Natural killer cell (primary cell): ENCODE measurements at regions of chr14 and their contacts with region 1.

Region 1: GRCh38 chr14:74493343-74494261 is at the start of gene ISCA2:
- DNase-seq: peak; percentile 98 to 99
- ATAC-seq: peak; percentile 88 to 97 (median 91)
- H3K4me3 ChIP-seq: peak within 1 kb of the TSS; percentile 92
- H3K4me3 Mint-ChIP-seq: no peak within 1 kb of the TSS
- H3K27ac ChIP-seq: peak within 1 kb of the TSS; percentile 65
- H3K27ac Mint-ChIP-seq: no peak within 1 kb of the TSS
- H3K4me1 ChIP-seq: peaks cover 18% of the 10 kb centered on the region
- H3K4me1 Mint-ChIP-seq: peaks cover 16 to 17% of the 10 kb centered on the region in 2 donors
- H3K27me3 ChIP-seq: no peaks in the 10 kb centered on the region
- H3K27me3 Mint-ChIP-seq: no peaks in the 10 kb centered on the region
- CTCF ChIP-seq: no peak
- total RNA-seq, gene ISCA2: 12.0 to 18.2 (median 15.3) TPM

Region 2: GRCh38 chr14:74084277-74085046 is 409.1 kb before region 1 on chr14 and contains the starts of genes ALDH6A1 and LIN52:
- intact Hi-C with region 1: loop called (anchors 2 kb)
- DNase-seq: peak; percentile 100
- ATAC-seq: peak; percentile 85 to 95 (median 86)
- H3K4me3 ChIP-seq: peak within 1 kb of the TSS; percentile 72
- H3K4me3 Mint-ChIP-seq: peak within 1 kb of the TSS; percentile 99
- H3K27ac ChIP-seq: peak within 1 kb of the TSS; percentile 69
- H3K27ac Mint-ChIP-seq: peak within 1 kb of the TSS; percentile 92 to 96
- H3K4me1 ChIP-seq: peaks cover 11% of the 10 kb centered on the region
- H3K4me1 Mint-ChIP-seq: peaks cover 39 to 50% of the 10 kb centered on the region in 2 donors
- H3K27me3 ChIP-seq: no peaks in the 10 kb centered on the region
- H3K27me3 Mint-ChIP-seq: no peaks in the 10 kb centered on the region
- CTCF ChIP-seq: no peak
- total RNA-seq, gene ALDH6A1: 8.5 to 9.6 (median 9.5) TPM
- total RNA-seq, gene LIN52: 10.6 to 15.0 (median 12.8) TPM

Region 3: DNA sequence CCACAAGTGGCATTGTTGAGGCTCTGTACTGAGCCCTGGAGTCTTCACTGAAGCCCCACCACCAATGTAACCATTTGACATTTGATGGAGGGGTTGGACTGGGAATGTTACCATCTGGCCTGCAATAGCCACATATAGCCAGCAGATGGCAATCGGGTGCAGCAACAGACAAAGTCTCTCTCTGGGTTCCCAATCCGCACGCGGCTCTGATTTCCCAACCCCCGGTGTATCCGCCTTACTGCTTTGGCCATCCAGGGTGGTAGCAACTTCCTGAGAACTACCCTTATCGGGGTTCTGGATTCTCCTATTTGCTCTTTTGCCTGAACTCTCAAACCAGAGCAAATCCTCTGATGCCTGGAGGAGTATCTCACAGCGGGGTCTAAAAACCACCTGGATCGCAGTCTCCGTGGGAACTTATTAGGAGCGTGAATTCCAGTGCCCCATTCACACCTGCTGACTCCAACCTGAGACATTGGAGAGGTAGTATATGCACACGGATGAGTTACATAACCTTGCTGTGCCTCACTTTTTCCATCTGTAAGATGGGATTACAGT is 131.2 kb before region 1 on chr14:
- intact Hi-C with region 1: loop called (anchors 1 kb)
- DNase-seq: peak; percentile 54 to 78
- ATAC-seq: peak; percentile 76 to 86 (median 81)
- H3K4me3 ChIP-seq: no peak overlapping the region
- H3K4me3 Mint-ChIP-seq: no peak overlapping the region
- H3K27ac ChIP-seq: no peak overlapping the region
- H3K27ac Mint-ChIP-seq: peak overlapping the region in 1 of 2 donors; percentile 2
- H3K4me1 ChIP-seq: peaks cover 3% of the 10 kb centered on the region
- H3K4me1 Mint-ChIP-seq: peaks cover 5% of the 10 kb centered on the region in 2 donors
- H3K27me3 ChIP-seq: no peaks in the 10 kb centered on the region
- H3K27me3 Mint-ChIP-seq: peaks cover 10 to 20% of the 10 kb centered on the region in 2 donors
- CTCF ChIP-seq: peak; percentile 91

Region 4: GRCh38 chr14:74712499-74713394 is 219.1 kb after region 1 on chr14 and contains the starts of genes AREL1 and FCF1:
- intact Hi-C with region 1: loop called (anchors 2 kb)
- DNase-seq: peak; percentile 74 to 94
- ATAC-seq: peak; percentile 92 to 94 (median 93)
- H3K4me3 ChIP-seq: peak within 1 kb of the TSS; percentile 76
- H3K4me3 Mint-ChIP-seq: peak within 1 kb of the TSS; percentile 97
- H3K27ac ChIP-seq: peak within 1 kb of the TSS; percentile 87
- H3K27ac Mint-ChIP-seq: peak within 1 kb of the TSS; percentile 97 to 99
- H3K4me1 ChIP-seq: peaks cover 7% of the 10 kb centered on the region
- H3K4me1 Mint-ChIP-seq: peaks cover 50 to 54% of the 10 kb centered on the region in 2 donors
- H3K27me3 ChIP-seq: no peaks in the 10 kb centered on the region
- H3K27me3 Mint-ChIP-seq: no peaks in the 10 kb centered on the region
- CTCF ChIP-seq: no peak
- total RNA-seq, gene AREL1: 65.9 to 83.0 (median 82.3) TPM
- total RNA-seq, gene FCF1: 37.1 to 49.6 (median 40.4) TPM

Region 5: DNA sequence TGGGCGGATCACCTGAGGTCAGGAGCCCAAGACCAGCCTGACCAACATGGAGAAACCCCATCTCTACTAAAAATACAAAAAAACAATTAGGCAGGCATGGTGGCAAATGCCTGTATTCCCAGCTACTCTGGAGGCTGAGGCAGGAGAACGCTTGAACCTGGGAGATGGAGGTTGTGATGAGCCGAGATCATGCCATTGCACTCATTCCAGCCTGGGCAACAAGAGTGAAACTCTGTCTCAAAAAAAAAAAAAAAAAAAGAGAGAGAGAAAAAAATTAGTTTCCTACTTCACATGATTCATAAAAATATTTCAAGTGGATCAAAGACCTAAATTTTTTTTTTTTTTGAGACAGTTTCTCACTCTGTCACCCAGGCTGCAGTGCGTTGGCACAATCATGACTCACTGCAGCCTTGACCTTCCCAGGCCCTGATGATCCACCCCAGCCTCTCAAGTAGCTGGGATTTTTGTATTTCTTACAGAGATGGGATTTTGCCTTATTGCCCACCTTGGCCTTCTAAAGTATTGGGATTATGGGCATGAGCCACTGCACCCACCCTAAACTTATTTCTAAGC is 244.2 kb after region 1 on chr14:
- intact Hi-C with region 1: no loop called
- DNase-seq: no peak
- ATAC-seq: no peak
- H3K4me3 ChIP-seq: no peak overlapping the region
- H3K4me3 Mint-ChIP-seq: no peak overlapping the region
- H3K27ac ChIP-seq: no peak overlapping the region
- H3K27ac Mint-ChIP-seq: no peak overlapping the region
- H3K4me1 ChIP-seq: no peaks in the 10 kb centered on the region
- H3K4me1 Mint-ChIP-seq: no peaks in the 10 kb centered on the region
- H3K27me3 ChIP-seq: no peaks in the 10 kb centered on the region
- H3K27me3 Mint-ChIP-seq: no peaks in the 10 kb centered on the region
- CTCF ChIP-seq: no peak

Region 6: GRCh38 chr14:75002392-75003249 is 509.0 kb after region 1 on chr14 and contains the start of gene EIF2B2:
- intact Hi-C with region 1: loop called (anchors 1 kb)
- DNase-seq: peak; percentile 97 to 99
- ATAC-seq: peak; percentile 93 to 99 (median 93)
- H3K4me3 ChIP-seq: peak within 1 kb of the TSS; percentile 71
- H3K4me3 Mint-ChIP-seq: peak within 1 kb of the TSS; percentile 98
- H3K27ac ChIP-seq: peak within 1 kb of the TSS; percentile 99
- H3K27ac Mint-ChIP-seq: peak within 1 kb of the TSS; percentile 94 to 95
- H3K4me1 ChIP-seq: peaks cover 21% of the 10 kb centered on the region
- H3K4me1 Mint-ChIP-seq: peaks cover 55 to 58% of the 10 kb centered on the region in 2 donors
- H3K27me3 ChIP-seq: no peaks in the 10 kb centered on the region
- H3K27me3 Mint-ChIP-seq: no peaks in the 10 kb centered on the region
- CTCF ChIP-seq: no peak
- total RNA-seq, gene EIF2B2: 22.2 to 45.1 (median 31.2) TPM